PC-9 (cell line): ENCODE measurements at regions of chr15 and their contacts with region 1.

Region 1: DNA sequence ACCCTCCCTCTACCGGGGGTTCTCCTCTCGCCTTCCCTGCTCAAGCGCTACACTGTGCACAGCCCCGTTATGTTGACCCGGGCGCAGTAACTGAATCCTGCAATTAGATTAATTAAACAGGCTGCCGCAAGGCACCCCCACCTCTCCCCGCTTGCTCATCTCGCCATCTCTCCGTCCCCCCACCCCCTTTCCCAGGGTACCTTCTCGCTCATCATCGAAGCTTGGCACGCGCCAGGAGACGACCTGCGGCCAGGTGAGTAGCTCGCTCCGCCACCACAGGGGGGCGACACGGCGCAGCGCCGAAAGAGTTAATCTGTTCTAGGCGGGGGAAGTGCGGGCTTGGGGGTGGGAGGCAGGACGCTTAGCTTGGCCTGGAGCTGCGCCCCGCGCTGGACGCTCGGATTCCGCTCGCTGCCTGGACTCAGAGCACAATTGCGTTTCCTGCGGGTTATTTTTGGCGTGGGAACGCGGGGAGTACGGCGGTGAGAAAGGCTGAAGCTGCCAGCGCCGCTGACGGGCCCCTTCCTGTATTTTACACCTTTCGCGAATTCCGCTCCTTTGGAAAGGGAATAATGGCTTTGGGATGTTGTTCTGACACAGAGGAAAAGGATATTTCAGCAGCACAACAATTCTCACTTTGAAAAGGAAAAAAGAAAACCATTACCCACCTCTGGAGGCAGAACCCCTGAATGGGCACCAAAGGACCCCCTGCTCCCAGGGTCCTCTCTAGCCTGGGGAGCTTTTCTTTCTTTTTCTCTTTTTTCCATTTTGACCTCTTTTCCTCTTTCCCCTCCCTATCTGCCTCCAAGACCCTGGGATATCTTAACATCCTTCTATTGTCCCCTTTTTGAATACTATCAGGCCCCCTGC is 1.5 kb downstream of the DLL4 start:
- DNase-seq: no peak
- H3K4me3 ChIP-seq: peak overlapping the region; percentile 77; the same call in 1 of the 2 replicates
- H3K27ac ChIP-seq: no peak overlapping the region
- H3K4me1 ChIP-seq: 0 out of 2 replicates have a peak, but pooled peaks cover 6% of the 10 kb centered on the region
- H3K27me3 ChIP-seq: peaks cover 29% of the 10 kb centered on the region
- CTCF ChIP-seq: peak; percentile 65

Region 2: GRCh38 chr15:40914486-40914885 is 16.2 kb before region 1 on chr15:
- CTCF ChIA-PET with region 1: interaction called, 19 read pairs
- POLR2A ChIA-PET with region 1: no interaction called
- intact Hi-C with region 1: no loop called
- DNase-seq: no peak
- H3K4me3 ChIP-seq: no peak overlapping the region
- H3K27ac ChIP-seq: no peak overlapping the region
- H3K4me1 ChIP-seq: no peaks in the 10 kb centered on the region
- H3K27me3 ChIP-seq: no peaks in the 10 kb centered on the region
- CTCF ChIP-seq: no peak

Region 3: GRCh38 chr15:40941528-40942336 is 11.1 kb after region 1 on chr15:
- CTCF ChIA-PET with region 1: interaction called, 10 read pairs
- POLR2A ChIA-PET with region 1: interaction called, 9 read pairs
- intact Hi-C with region 1: no loop called
- DNase-seq: peak; percentile 55 to 82
- H3K4me3 ChIP-seq: peak overlapping the region; percentile 64; the same call in 1 of the 2 replicates
- H3K27ac ChIP-seq: peak overlapping the region; percentile 32; the same call in 1 of the 2 replicates
- H3K4me1 ChIP-seq: 0 out of 2 replicates have a peak, but pooled peaks cover 6% of the 10 kb centered on the region
- H3K27me3 ChIP-seq: no peaks in the 10 kb centered on the region
- CTCF ChIP-seq: peak; percentile 36; the same call in 1 of the 2 replicates

Region 4: DNA sequence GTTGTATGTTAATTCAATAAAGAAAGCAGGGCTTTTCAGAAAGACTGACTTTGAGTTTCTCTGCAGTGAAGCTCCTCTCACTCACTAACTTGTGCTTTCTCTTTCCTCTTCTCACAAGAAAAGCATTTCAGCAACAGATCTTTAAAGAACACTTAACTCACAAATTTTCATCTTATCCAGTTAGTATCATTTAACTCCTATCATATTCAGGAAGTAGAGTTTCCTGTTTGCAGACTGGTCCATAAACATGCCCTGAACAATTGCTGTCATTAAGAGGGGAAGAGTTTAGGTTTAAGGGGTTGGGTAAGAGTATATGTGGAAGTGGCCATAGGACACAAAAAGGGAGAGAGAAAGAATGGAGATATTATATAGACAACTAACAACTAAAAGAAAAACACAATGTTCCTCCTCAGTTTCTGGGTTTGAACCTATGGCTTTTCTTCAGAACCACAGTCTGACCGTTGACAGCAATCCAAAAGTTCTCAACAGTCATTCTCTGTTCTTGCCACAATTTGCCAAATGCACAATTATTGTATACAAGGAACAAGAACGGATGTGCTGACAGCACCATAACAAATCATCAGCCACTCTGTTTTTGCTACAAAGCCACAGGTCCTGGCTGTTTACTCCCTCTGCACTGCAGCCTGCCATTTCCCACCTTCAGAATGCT is 86.5 kb after region 1 on chr15:
- CTCF ChIA-PET with region 1: interaction called, 12 read pairs
- POLR2A ChIA-PET with region 1: no interaction called
- intact Hi-C with region 1: no loop called
- DNase-seq: no peak
- H3K4me3 ChIP-seq: no peak overlapping the region
- H3K27ac ChIP-seq: no peak overlapping the region
- H3K4me1 ChIP-seq: peaks cover 13% of the 10 kb centered on the region
- H3K27me3 ChIP-seq: no peaks in the 10 kb centered on the region
- CTCF ChIP-seq: no peak

Region 5: DNA sequence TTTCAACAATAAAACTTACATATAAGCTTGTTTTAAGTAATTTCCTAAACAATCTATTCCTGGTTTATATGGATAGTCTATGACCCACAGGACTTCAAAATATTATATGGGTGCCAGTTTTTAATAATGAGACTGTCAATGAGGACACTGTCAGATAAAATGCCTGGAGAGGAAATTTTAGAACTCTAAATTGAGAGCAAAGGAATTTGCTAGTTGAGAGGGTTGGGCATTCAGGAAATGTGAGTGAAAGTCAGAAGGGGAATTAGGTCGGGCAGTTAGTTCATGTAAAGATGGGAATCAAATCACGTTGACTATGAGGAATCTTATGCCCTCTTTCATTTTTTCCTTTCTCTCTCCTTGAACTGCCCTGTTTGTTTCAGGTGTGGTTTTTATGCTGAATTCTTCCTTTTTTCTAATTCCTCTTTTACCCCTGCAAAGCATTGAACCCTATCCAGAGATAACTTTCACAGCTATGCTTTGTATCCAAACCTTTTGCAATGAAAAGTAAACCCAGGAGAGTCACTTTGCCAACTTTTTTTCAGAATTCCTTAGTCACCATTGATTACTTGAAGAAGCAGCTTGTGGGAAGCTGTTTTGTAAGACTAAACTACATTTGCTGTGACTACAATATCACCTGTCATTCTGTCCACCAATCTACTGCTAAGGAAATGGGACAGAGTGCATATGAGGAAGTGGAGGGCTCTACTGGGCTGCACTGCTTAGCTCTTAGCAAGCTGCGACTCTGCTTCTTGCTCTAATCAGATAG is 328.2 kb after region 1 on chr15:
- CTCF ChIA-PET with region 1: interaction called, 27 read pairs
- POLR2A ChIA-PET with region 1: no interaction called
- intact Hi-C with region 1: no loop called
- DNase-seq: peak; percentile 47 to 96
- H3K4me3 ChIP-seq: peak overlapping the region; percentile 37
- H3K27ac ChIP-seq: peak overlapping the region; percentile 89
- H3K4me1 ChIP-seq: peaks cover 62% of the 10 kb centered on the region
- H3K27me3 ChIP-seq: no peaks in the 10 kb centered on the region
- CTCF ChIP-seq: no peak